WTC11 (cell line): ENCODE measurements at regions of chr3 and their contacts with region 1.

Region 1: GRCh38 chr3:197501879-197502620 is 53.7 kb downstream of the BDH1 start:
- DNase-seq: peak; percentile 81
- ATAC-seq: peak; percentile 93
- H3K4me3 Mint-ChIP-seq: no peak overlapping the region
- H3K27ac Mint-ChIP-seq: no peak overlapping the region
- H3K4me1 Mint-ChIP-seq: no peaks in the 10 kb centered on the region
- H3K27me3 Mint-ChIP-seq: peaks cover 7% of the 10 kb centered on the region
- CTCF ChIP-seq: peak; percentile 65

Region 2: DNA sequence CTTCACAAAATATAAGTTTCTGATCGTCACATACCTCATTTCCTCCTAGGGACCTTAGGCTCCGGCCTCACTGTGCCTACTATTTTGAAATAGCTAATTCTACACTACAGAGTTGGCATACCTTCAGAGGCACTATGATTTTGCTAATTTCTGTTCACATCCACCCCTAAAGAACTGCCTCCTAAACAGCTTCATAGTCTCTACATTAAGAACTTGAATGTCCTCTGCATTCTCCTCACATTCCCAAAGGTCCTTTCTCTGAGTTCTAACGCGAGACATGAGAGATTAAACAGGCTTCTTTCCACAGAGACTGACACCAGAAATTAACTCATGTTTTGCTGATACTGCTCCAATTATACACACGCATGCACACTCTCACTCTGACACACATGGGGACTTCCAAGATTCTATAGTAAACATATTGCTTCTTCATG is 279.1 kb before region 1 on chr3:
- CTCF ChIA-PET with region 1: interaction called, 12 read pairs
- POLR2A ChIA-PET with region 1: no interaction called
- DNase-seq: no peak
- ATAC-seq: no peak
- H3K4me3 Mint-ChIP-seq: no peak overlapping the region
- H3K27ac Mint-ChIP-seq: peak overlapping the region; percentile 67; the same call in 1 of the 2 replicates
- H3K4me1 Mint-ChIP-seq: peaks cover 69% of the 10 kb centered on the region
- H3K27me3 Mint-ChIP-seq: no peaks in the 10 kb centered on the region
- CTCF ChIP-seq: no peak

Region 3: GRCh38 chr3:197423376-197423775 is 78.7 kb before region 1 on chr3:
- CTCF ChIA-PET with region 1: no interaction called
- POLR2A ChIA-PET with region 1: no interaction called
- DNase-seq: no peak
- ATAC-seq: no peak
- H3K4me3 Mint-ChIP-seq: no peak overlapping the region
- H3K27ac Mint-ChIP-seq: no peak overlapping the region
- H3K4me1 Mint-ChIP-seq: peaks cover 2% of the 10 kb centered on the region; the same call in 1 of the 2 replicates
- H3K27me3 Mint-ChIP-seq: no peaks in the 10 kb centered on the region; the same call in 1 of the 2 replicates
- CTCF ChIP-seq: no peak